Activated CD4-positive, alpha-beta T cell treated with anti-CD3 and anti-CD28 coated beads for 36 hours (primary cell): ENCODE measurements at regions of chr5 and their contacts with region 1.

Region 1: DNA sequence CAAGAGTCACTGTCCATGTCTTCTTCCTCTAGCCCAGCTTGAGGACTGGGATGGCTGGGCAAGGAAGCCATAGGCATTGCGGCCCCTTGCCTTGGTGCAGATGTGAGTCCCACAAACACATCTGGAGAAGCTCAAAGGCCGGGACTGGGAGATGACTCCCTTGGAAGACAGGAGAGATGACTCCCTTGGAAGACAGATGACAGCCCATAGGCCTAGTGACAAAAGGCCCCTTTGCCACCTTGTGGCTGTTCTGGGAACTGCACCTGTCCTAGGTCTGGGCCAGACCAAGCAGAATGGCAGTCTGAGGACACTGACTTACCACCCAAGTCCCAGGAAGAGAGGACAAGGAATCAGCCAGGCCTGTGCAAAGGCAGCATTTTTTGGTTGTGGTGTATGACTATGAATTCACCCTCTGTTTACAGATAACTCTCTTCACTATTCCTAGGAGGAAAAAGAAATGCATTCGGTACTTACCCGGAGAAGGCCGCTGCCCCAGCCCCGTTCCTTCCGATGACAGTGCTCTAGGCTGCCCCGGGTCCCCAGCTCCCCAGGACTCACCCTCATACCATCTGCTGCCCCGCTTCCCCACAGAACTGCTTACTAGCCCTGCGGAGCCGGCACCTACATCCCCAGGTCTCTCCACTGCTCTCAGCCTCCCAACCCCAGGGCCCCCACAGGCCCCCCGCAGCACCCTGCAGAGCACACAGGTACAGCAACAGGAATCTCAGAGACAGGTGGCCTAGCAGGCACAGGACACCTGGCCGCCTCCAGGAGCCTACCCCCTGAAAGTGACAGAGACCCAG is 30.8 kb downstream of the SKP1 start:
- DNase-seq: peak; percentile 91
- ATAC-seq: peak; percentile 81
- H3K4me3 Mint-ChIP-seq: no peak overlapping the region
- H3K27ac Mint-ChIP-seq: peak overlapping the region; percentile 44
- H3K4me1 Mint-ChIP-seq: peaks cover 43% of the 10 kb centered on the region
- H3K27me3 Mint-ChIP-seq: no peaks in the 10 kb centered on the region

Region 2: GRCh38 chr5:134026521-134027268 is 119.3 kb before region 1 on chr5:
- CTCF ChIA-PET with region 1: interaction called, 554 read pairs
- POLR2A ChIA-PET with region 1: no interaction called
- intact Hi-C with region 1: no loop called
- DNase-seq: peak; percentile 75
- ATAC-seq: peak; percentile 99
- H3K4me3 Mint-ChIP-seq: no peak overlapping the region
- H3K27ac Mint-ChIP-seq: no peak overlapping the region
- H3K4me1 Mint-ChIP-seq: no peaks in the 10 kb centered on the region
- H3K27me3 Mint-ChIP-seq: no peaks in the 10 kb centered on the region

Region 3: GRCh38 chr5:134161513-134162395 is 15.8 kb after region 1 on chr5:
- CTCF ChIA-PET with region 1: interaction called, 13 read pairs
- POLR2A ChIA-PET with region 1: interaction called, 4 read pairs
- intact Hi-C with region 1: no loop called
- DNase-seq: no peak
- ATAC-seq: peak; percentile 82
- H3K4me3 Mint-ChIP-seq: no peak overlapping the region
- H3K27ac Mint-ChIP-seq: peak overlapping the region; percentile 60
- H3K4me1 Mint-ChIP-seq: peaks cover 43% of the 10 kb centered on the region
- H3K27me3 Mint-ChIP-seq: no peaks in the 10 kb centered on the region

Region 4: DNA sequence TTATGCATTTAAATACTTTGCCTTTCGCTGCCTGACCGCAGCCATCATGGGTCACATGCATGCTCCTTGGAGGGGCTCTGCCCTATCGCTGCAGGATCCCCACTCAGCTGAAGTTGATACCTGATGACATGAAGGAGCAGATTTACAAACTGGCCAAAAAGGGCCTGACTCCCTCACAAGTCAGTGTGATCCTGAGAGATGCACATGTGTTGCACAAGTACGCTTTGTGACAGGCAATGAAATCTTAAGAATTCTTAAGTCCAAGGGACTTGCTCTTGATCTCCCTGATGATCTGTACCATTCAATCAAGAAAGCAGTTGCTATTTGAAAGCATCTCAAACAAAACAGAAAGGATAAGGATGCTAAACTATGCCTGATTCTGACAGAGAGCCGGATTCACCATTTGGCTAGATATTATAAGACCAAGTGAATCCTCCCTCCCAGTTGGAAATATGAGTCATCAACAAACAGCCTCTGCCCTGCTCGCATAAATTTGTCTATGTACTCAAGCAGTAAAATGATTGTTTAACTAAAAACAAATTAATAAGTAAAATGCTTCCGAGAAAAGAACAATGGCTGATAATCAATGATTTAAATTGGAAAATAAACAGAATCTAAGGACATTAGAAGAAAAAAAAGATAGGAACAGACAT is 121.5 kb after region 1 on chr5:
- CTCF ChIA-PET with region 1: no interaction called
- POLR2A ChIA-PET with region 1: no interaction called
- intact Hi-C with region 1: no loop called
- DNase-seq: no peak
- ATAC-seq: no peak
- H3K4me3 Mint-ChIP-seq: no peak overlapping the region
- H3K27ac Mint-ChIP-seq: no peak overlapping the region
- H3K4me1 Mint-ChIP-seq: no peaks in the 10 kb centered on the region
- H3K27me3 Mint-ChIP-seq: no peaks in the 10 kb centered on the region